ENCODE measurements at regions of chrX and their contacts with region 1.

Region 1: DNA sequence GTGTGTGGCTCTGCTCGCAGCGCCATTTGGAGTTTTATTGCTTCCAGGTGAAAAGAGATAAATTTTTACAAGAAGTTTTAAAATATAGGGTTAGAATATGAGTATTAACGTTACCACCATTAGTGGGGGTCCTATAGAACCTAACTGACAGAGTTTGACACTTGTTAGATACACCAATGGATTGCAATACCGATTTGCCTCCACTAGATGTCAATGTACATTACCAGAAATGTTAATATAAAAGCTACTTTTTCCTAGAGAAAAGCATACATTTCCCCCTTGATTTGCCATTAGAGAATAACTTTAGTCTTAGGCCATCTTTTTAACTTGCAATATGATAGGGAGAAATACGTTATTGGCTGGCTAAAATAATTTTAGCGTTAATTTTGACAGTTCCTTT is 108.4 kb downstream of the LINC00632 start:
- DNase-seq: peak; percentile 8
- H3K4me3 ChIP-seq: no peak overlapping the region
- H3K27ac ChIP-seq: no peak overlapping the region
- H3K4me1 ChIP-seq: no peaks in the 10 kb centered on the region
- H3K27me3 ChIP-seq: no peaks in the 10 kb centered on the region
- CTCF ChIP-seq: peak; percentile 27 to 29
- POLR2A ChIP-seq: no peak

Region 2: GRCh38 chrX:140799216-140799615 is 18.7 kb before region 1 on chrX:
- CTCF ChIA-PET with region 1: no interaction called
- POLR2A ChIA-PET with region 1: no interaction called
- dilution Hi-C with region 1: no loop called
- intact Hi-C with region 1: loop called (anchors 2 kb)
- DNase-seq: no peak
- H3K4me3 ChIP-seq: no peak overlapping the region
- H3K27ac ChIP-seq: no peak overlapping the region
- H3K4me1 ChIP-seq: no peaks in the 10 kb centered on the region
- H3K27me3 ChIP-seq: no peaks in the 10 kb centered on the region
- CTCF ChIP-seq: no peak
- POLR2A ChIP-seq: no peak

Measured in endothelial cell of umbilical vein (primary cell).